Esophagus squamous epithelium (tissue), 5 donors: ENCODE measurements at regions of chr6 and their contacts with region 1.

Region 1: GRCh38 chr6:16332175-16332542 is 93.8 kb downstream of the GMPR start:
- DNase-seq: peak; percentile 41
- H3K4me3 ChIP-seq: peak overlapping the region in 1 of 4 donors; percentile 33
- H3K27ac ChIP-seq: peak overlapping the region; percentile 20 to 64 (median 30)
- H3K4me1 ChIP-seq: peaks cover 47 to 62% (median 47%) of the 10 kb centered on the region in 3 donors
- H3K27me3 ChIP-seq: no peaks in the 10 kb centered on the region
- CTCF ChIP-seq: peak; percentile 86 to 95 (median 94)
- POLR2A ChIP-seq: no peak

Region 2: DNA sequence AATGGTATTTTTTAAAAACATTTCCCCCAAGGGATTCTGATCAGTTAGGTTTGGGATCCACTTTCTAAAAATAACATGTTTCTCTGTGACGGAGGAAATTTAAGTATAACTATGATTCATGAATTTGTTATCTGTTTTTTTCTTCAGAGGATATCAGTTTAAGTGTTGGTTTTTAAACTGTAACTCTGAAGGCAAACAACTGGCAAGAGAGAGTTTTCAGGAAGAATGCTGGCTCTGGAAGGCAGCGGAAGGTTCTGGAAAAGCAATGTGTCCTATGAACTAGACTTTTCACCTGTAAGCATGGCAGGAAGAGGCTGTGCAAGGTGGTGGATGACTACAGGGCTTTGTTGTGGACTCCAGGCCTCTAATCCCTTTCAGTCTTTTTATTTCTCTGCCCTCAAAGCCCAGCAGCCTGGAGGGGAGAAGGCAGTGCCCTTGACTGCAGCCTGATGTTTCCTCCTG is 59.3 kb after region 1 on chr6:
- intact Hi-C with region 1: no loop called
- DNase-seq: no peak
- H3K4me3 ChIP-seq: no peak overlapping the region
- H3K27ac ChIP-seq: peak overlapping the region in 2 of 4 donors; percentile 18 to 29
- H3K4me1 ChIP-seq: peaks cover 0 to 39% (median 5%) of the 10 kb centered on the region in 3 donors
- H3K27me3 ChIP-seq: no peaks in the 10 kb centered on the region
- CTCF ChIP-seq: no peak
- POLR2A ChIP-seq: no peak

Region 3: DNA sequence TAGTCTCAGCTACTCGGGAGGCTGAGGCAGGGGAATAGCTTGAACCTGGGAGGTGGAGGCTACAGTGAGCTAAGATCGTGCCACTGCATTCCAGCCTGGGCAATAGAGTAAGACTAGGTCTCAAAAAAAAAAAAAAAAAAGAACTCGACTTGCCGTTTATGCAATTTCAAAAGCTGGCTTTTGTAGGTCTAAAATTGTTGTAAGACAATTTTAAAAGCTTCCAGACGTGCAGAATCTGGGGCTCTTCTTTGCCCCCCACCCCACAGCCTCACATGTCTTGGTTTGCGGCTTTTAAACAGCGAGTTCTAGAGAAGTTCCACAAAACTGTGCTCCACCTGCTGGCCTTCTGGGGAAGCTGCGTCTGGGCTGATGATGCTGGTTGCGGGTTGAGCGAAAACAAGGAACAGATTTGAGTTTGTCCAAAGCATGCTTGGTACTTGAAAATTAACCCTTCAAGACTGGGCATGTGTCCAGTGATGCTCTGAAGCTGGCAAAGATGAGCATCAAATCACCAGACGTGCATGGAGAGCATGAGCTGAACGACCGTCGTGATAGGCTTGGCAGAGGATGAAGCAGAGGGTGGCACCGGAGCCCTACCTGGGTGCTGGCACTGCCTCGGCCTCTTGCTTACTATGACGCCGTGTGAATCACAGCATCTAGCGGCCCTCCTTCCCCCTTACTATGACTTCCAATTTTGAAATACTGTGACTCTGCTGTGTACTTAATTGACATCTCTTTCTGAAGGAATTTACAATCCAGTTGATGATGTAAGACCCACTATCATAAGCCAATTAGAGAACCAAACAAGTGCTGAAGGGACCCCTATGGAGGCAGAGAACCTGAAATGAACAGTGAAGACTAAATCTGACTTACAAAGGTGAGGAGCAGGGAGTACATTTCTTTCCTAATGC is 77.6 kb after region 1 on chr6:
- intact Hi-C with region 1: loop called (anchors 10 kb)
- DNase-seq: peak; percentile 10
- H3K4me3 ChIP-seq: no peak overlapping the region
- H3K27ac ChIP-seq: peak overlapping the region in 1 of 4 donors; percentile 11
- H3K4me1 ChIP-seq: peaks cover 4 to 71% (median 22%) of the 10 kb centered on the region in 3 donors
- H3K27me3 ChIP-seq: no peaks in the 10 kb centered on the region
- CTCF ChIP-seq: peak; percentile 59 to 78 (median 71)
- POLR2A ChIP-seq: no peak

Region 4: DNA sequence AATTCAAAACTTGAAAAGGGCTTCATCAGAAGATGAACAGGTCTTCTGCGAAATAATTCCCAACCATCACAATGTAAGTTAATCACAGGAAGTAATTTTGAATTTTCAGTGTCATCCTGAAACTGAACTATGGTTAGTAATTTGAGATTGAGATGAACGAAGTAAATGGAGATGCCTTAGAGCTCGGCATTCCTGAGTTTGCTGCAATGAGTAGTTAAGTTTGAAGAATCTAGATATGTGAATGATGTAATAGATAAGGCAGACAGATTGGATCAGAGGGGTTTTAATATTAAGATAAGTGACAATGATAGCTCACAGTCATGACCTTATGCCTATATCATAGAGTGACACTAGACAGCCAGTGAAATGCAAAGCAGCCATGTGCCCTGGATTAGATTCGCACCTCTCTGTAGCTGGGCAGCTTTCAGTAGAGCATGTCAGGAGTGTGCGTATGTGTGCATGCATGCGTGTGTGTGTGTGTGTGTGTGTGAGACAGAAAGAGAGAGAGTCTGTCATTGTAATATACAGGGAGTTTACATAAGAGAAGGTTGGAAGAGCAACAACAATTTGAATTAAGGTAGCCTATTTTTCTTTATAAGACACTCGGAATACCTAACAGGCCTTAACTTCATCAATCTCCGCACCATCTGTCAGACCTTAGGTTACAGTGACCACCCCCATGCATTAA is 139.2 kb after region 1 on chr6:
- intact Hi-C with region 1: no loop called
- DNase-seq: no peak
- H3K4me3 ChIP-seq: no peak overlapping the region
- H3K27ac ChIP-seq: no peak overlapping the region
- H3K4me1 ChIP-seq: peaks cover 2 to 18% (median 6%) of the 10 kb centered on the region in 3 donors
- H3K27me3 ChIP-seq: no peaks in the 10 kb centered on the region
- CTCF ChIP-seq: no peak
- POLR2A ChIP-seq: no peak

Region 5: GRCh38 chr6:16503970-16504415 is 171.8 kb after region 1 on chr6:
- intact Hi-C with region 1: loop called (anchors 10 kb)
- DNase-seq: no peak
- H3K4me3 ChIP-seq: no peak overlapping the region
- H3K27ac ChIP-seq: no peak overlapping the region
- H3K4me1 ChIP-seq: peaks cover 0 to 36% (median 0%) of the 10 kb centered on the region in 3 donors
- H3K27me3 ChIP-seq: no peaks in the 10 kb centered on the region
- CTCF ChIP-seq: no peak
- POLR2A ChIP-seq: no peak

Region 6: DNA sequence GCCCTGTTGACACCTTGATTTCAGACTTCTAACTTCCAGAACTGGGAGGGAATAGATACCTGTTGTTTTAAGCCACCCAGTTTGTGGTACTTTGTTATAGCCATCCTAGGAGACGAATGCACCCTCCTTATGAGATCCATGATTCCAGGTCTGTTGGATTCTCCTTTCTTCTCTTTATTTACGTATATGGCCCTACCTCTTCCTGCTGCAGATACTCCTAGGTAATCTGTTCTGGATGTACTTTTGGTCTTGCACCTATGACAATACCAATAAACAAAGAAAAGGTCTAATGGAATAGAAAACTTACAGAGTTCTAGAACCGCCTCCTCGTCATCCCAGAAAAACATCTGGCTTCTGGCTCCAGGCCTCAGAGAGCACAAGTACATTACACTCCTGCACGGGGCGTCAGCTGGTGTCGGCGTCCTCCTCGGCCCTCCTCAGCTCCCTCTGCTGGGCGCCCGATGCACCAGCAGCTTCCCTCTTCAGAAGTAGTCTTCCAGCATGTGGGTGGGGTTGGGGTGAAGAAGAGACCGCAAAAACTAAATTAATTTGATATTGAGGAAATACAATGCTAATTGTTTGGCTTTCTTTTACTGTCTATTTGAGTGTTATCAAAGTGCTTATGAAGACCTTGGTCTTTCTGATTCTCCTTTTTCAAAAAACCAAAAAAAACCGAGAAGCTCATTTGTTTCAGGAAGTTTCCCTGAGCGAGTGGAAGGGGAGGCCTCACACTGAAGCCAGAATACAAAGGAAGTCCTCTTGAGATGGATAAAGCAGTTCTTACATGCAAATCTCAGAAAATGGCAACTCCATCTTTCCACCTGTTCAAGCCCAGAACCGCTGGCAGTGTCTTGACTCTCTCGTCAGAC is 438.8 kb after region 1 on chr6:
- intact Hi-C with region 1: loop called (anchors 5 kb)
- DNase-seq: peak; percentile 24
- H3K4me3 ChIP-seq: no peak overlapping the region
- H3K27ac ChIP-seq: peak overlapping the region in 3 of 4 donors; percentile 8 to 72 (median 67)
- H3K4me1 ChIP-seq: peaks cover 24 to 52% (median 25%) of the 10 kb centered on the region in 3 donors
- H3K27me3 ChIP-seq: no peaks in the 10 kb centered on the region
- CTCF ChIP-seq: peak; percentile 85 to 96 (median 93)
- POLR2A ChIP-seq: no peak